ENCODE measurements at regions of chr6 and their contacts with region 1.

Region 1: GRCh38 chr6:166786704-166787293 is 159.7 kb upstream of the RPS6KA2 start:
- DNase-seq: no peak
- H3K4me3 ChIP-seq: no peak overlapping the region
- H3K27ac ChIP-seq: no peak overlapping the region
- H3K4me1 ChIP-seq: no peaks in the 10 kb centered on the region
- H3K27me3 ChIP-seq: no peaks in the 10 kb centered on the region
- CTCF ChIP-seq: peak; percentile 68 to 78 (median 72)
- EP300 ChIP-seq: no peak
- POLR2A ChIP-seq: no peak

Region 2: DNA sequence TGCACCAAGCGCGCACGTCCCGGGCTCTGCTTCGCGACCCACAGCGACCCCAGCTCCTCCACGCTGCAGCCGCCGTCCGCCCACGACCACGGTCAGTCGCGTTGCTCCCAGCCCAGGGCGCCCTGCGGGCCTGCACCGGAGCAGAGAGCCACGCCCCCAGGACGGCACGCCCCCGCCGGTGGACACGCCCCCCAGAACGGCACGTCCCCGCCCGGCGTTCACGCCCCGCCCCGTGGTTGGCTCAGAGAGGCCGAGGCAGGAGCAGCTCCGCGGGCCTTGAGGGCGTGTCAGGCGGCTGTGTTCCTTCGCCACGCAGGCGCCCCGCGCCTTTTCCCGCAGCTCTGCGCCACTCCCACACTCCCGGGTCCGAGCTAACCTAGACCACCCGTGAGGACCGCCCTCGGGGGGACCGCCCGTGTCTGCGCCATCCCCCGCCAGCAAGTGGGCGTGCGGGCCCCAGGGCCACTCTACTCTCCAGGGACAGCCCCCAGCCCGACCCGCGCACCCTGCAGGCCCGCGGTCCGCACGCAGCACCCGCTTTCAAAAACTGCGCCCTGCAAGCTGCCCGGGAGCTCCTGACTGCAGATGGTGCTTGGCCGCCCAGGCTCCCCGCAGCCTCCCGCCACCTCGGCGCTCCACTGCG is 169.8 kb after region 1 on chr6 and contains the start of gene RNASET2:
- in situ Hi-C with region 1: no loop called
- intact Hi-C with region 1: loop called (anchors 10 kb)
- DNase-seq: peak; percentile 100
- H3K4me3 ChIP-seq: peak within 1 kb of the TSS; percentile 58 to 92 (median 71)
- H3K27ac ChIP-seq: peak within 1 kb of the TSS; percentile 94 to 98 (median 97)
- H3K4me1 ChIP-seq: peaks cover 4 to 43% (median 21%) of the 10 kb centered on the region in 4 donors
- H3K27me3 ChIP-seq: no peaks in the 10 kb centered on the region
- CTCF ChIP-seq: no peak
- EP300 ChIP-seq: no peak
- POLR2A ChIP-seq: peak; percentile 92
- total RNA-seq, gene RNASET2: 121 to 191 (median 176) TPM

Region 3: DNA sequence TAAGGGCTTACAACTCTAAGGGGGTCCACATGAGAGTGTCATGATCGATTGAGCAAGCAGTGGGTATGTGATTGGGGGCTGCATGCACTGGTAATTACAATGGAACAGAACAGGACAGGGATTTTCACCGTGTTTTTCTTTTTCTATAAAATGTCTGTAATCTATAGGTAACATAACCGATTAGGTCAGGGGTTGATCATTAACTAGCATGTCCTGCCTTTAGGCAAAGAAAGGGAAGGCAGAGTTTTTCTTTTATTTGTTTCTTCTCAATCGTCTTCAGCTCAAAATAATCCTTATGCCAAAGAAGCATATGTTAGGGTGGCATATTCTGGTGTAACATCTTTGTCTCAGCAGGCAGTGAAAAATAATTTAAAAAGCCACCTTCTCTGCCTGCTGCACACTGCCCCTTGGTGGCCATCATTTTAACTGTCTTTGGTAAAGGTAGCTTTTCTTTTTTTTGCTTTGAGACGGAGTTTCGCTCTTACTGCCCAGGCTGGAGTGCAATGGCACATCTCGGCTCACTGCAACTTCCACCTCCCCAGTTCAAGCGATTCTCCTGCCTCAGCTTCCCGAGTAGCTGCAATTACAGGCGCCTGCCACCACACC is 202.7 kb after region 1 on chr6:
- in situ Hi-C with region 1: loop called (anchors 5 to 25 kb)
- intact Hi-C with region 1: loop called (anchors 10 kb)
- DNase-seq: no peak
- H3K4me3 ChIP-seq: no peak overlapping the region
- H3K27ac ChIP-seq: no peak overlapping the region
- H3K4me1 ChIP-seq: peaks cover 0 to 2% (median 0%) of the 10 kb centered on the region in 4 donors
- H3K27me3 ChIP-seq: no peaks in the 10 kb centered on the region
- CTCF ChIP-seq: peak; percentile 31 to 57 (median 47)
- EP300 ChIP-seq: no peak
- POLR2A ChIP-seq: no peak